Activated CD8-positive, alpha-beta T cell treated with anti-CD3 and anti-CD28 coated beads for 36 hours (primary cell): ENCODE measurements at regions of chr6 and their contacts with region 1.

Region 1: GRCh38 chr6:154928325-154928922 is 66.7 kb upstream of the TIAM2 start:
- DNase-seq: peak; percentile 84
- ATAC-seq: peak; percentile 77
- H3K4me3 Mint-ChIP-seq: no peak overlapping the region
- H3K27ac Mint-ChIP-seq: no peak overlapping the region
- H3K4me1 Mint-ChIP-seq: peaks cover 5% of the 10 kb centered on the region
- H3K27me3 Mint-ChIP-seq: no peaks in the 10 kb centered on the region
- CTCF ChIP-seq: peak; percentile 87

Region 2: DNA sequence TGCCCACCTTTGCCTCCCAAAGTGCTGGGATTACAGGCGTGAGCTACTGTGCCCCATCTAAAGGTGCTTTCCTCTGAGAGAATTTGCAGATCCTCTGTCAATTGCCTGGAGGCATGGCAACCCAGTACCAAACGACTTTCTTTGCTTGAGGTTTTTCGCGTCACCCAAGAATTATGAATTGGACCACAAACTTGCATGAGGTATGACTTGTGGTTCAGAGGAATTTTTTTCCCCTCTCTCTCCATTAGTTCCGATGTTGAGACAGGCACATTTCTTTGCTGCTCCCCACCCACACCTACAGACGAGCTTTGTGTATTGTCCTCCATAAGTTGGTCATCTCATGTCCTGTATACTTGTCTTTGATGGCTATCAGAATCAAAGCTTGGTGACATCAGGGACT is 207.0 kb before region 1 on chr6:
- CTCF ChIA-PET with region 1: no interaction called
- POLR2A ChIA-PET with region 1: no interaction called
- intact Hi-C with region 1: no loop called
- DNase-seq: peak; percentile 13
- ATAC-seq: peak; percentile 30
- H3K4me3 Mint-ChIP-seq: no peak overlapping the region
- H3K27ac Mint-ChIP-seq: no peak overlapping the region
- H3K4me1 Mint-ChIP-seq: peaks cover 2% of the 10 kb centered on the region
- H3K27me3 Mint-ChIP-seq: peaks cover 14% of the 10 kb centered on the region
- CTCF ChIP-seq: no peak

Region 3: GRCh38 chr6:154868143-154868594 is 60.3 kb before region 1 on chr6:
- CTCF ChIA-PET with region 1: interaction called, 25 read pairs
- POLR2A ChIA-PET with region 1: no interaction called
- intact Hi-C with region 1: no loop called
- DNase-seq: no peak
- ATAC-seq: no peak
- H3K4me3 Mint-ChIP-seq: no peak overlapping the region
- H3K27ac Mint-ChIP-seq: no peak overlapping the region
- H3K4me1 Mint-ChIP-seq: peaks cover 17% of the 10 kb centered on the region
- H3K27me3 Mint-ChIP-seq: no peaks in the 10 kb centered on the region
- CTCF ChIP-seq: peak; percentile 67

Region 4: DNA sequence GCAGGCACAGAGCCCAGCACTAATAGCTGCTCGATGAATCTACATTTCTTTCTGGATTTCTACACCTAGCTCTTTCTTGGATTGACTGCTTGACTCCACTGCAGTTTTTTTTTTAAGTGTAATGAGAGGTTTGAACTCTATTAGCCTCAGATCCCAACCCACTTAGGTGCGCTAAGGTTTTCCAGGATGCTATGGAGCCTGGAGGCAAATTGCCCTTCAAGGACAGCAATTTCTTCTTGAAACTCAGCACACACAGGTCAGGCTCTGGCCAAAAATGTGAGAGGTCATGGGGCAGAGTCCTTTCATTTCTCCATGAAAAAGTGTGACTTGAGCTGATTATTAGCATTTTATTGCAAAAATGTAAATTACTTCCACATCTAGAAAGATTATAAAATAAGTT is 14.4 kb after region 1 on chr6:
- CTCF ChIA-PET with region 1: interaction called, 17 read pairs
- POLR2A ChIA-PET with region 1: no interaction called
- intact Hi-C with region 1: no loop called
- DNase-seq: no peak
- ATAC-seq: no peak
- H3K4me3 Mint-ChIP-seq: no peak overlapping the region
- H3K27ac Mint-ChIP-seq: no peak overlapping the region
- H3K4me1 Mint-ChIP-seq: no peaks in the 10 kb centered on the region
- H3K27me3 Mint-ChIP-seq: no peaks in the 10 kb centered on the region
- CTCF ChIP-seq: no peak

Region 5: DNA sequence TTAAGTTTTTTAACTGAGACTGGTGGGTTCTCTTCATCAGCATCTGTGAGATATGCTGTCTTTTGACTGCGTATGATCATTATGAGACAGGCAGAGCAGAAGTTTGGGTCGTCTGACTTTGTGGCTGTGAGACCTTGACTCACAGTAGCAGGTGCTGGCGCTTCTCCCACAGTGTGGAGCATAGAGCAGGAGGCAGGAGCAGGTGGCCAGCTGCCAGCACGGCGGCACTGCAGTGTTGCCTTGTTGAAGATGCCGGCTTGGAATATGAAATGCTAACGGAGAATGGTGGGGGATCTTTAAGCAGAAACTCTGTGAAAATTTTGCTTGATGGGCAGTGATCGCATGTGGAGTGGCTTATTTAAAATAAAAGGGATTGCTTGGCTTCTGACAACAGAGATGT is 171.7 kb after region 1 on chr6:
- CTCF ChIA-PET with region 1: no interaction called
- POLR2A ChIA-PET with region 1: no interaction called
- intact Hi-C with region 1: no loop called
- DNase-seq: no peak
- ATAC-seq: no peak
- H3K4me3 Mint-ChIP-seq: no peak overlapping the region
- H3K27ac Mint-ChIP-seq: no peak overlapping the region
- H3K4me1 Mint-ChIP-seq: peaks cover 8% of the 10 kb centered on the region
- H3K27me3 Mint-ChIP-seq: peaks cover 4% of the 10 kb centered on the region
- CTCF ChIP-seq: no peak

Region 6: GRCh38 chr6:155126727-155127439 is 198.5 kb after region 1 on chr6:
- CTCF ChIA-PET with region 1: interaction called, 11 read pairs
- POLR2A ChIA-PET with region 1: no interaction called
- intact Hi-C with region 1: no loop called
- DNase-seq: peak; percentile 86
- ATAC-seq: peak; percentile 93
- H3K4me3 Mint-ChIP-seq: no peak overlapping the region
- H3K27ac Mint-ChIP-seq: peak overlapping the region; percentile 81
- H3K4me1 Mint-ChIP-seq: peaks cover 33% of the 10 kb centered on the region
- H3K27me3 Mint-ChIP-seq: no peaks in the 10 kb centered on the region
- CTCF ChIP-seq: no peak

Region 7: GRCh38 chr6:155314092-155314772 is 385.8 kb after region 1 on chr6 and contains the start of gene TFB1M:
- CTCF ChIA-PET with region 1: interaction called, 11 read pairs
- POLR2A ChIA-PET with region 1: no interaction called
- intact Hi-C with region 1: no loop called
- DNase-seq: peak; percentile 99
- ATAC-seq: peak; percentile 96
- H3K4me3 Mint-ChIP-seq: peak within 1 kb of the TSS; percentile 98
- H3K27ac Mint-ChIP-seq: peak within 1 kb of the TSS; percentile 99
- H3K4me1 Mint-ChIP-seq: peaks cover 38% of the 10 kb centered on the region
- H3K27me3 Mint-ChIP-seq: no peaks in the 10 kb centered on the region
- CTCF ChIP-seq: no peak
- total RNA-seq, gene TFB1M: 70.9 to 76.6 TPM